ENCODE measurements at regions of chr10 and their contacts with region 1.

Region 1: GRCh38 chr10:17910125-17910789 is 41.5 kb upstream of the SLC39A12 start:
- DNase-seq: peak; percentile 51
- H3K4me3 ChIP-seq: no peak overlapping the region
- H3K27ac ChIP-seq: no peak overlapping the region
- H3K4me1 ChIP-seq: no peaks in the 10 kb centered on the region
- H3K27me3 ChIP-seq: peaks cover 5% of the 10 kb centered on the region in 2 experiments
- CTCF ChIP-seq: peak; percentile 46 to 47
- POLR2A ChIP-seq: no peak

Region 2: GRCh38 chr10:17836942-17837341 is 73.3 kb before region 1 on chr10:
- CTCF ChIA-PET with region 1: no interaction called
- POLR2A ChIA-PET with region 1: no interaction called
- dilution Hi-C with region 1: no loop called
- intact Hi-C with region 1: no loop called
- DNase-seq: peak; percentile 87
- H3K4me3 ChIP-seq: peak overlapping the region in 1 of 3 experiments; percentile 28
- H3K27ac ChIP-seq: peak overlapping the region; percentile 62
- H3K4me1 ChIP-seq: peaks cover 20% of the 10 kb centered on the region
- H3K27me3 ChIP-seq: no peaks in the 10 kb centered on the region
- CTCF ChIP-seq: no peak
- POLR2A ChIP-seq: no peak

Region 3: DNA sequence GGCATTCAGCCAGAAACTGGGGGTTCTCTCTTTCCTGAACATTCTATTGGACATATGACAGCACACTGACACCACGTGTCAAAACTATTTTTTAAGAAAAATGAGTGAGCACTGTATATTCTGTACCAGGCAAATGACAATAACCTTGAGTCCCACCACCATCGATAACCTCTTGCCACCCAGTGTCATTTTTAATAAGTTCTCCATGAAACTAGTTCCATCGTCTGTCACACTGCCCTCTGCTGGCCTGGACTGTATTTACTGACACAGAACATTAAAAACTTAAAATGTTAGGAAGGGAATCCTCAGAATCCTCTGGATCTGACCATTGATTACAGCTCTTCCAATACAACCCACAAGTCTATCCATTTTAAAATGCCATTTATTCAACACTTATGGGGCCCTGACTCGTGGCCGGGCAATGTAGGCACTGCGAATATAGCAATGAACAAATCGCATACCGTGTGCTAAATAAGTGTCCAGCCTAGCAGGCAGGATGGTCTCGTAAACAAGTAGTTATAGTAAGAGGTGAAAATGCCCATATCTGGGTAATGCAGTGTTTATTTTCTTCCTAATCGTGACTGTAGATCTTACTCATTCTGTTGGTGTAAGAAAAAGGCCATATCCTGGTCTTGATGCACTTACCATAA is 194.1 kb after region 1 on chr10:
- CTCF ChIA-PET with region 1: no interaction called
- POLR2A ChIA-PET with region 1: no interaction called
- dilution Hi-C with region 1: no loop called
- intact Hi-C with region 1: loop called (anchors 1 kb)
- DNase-seq: peak; percentile 52
- H3K4me3 ChIP-seq: no peak overlapping the region
- H3K27ac ChIP-seq: no peak overlapping the region
- H3K4me1 ChIP-seq: no peaks in the 10 kb centered on the region
- H3K27me3 ChIP-seq: no peaks in the 10 kb centered on the region
- CTCF ChIP-seq: peak; percentile 50 to 52
- POLR2A ChIP-seq: no peak

Region 4: GRCh38 chr10:18214691-18215563 is 304.7 kb after region 1 on chr10:
- CTCF ChIA-PET with region 1: interaction called, 3 read pairs
- POLR2A ChIA-PET with region 1: no interaction called
- dilution Hi-C with region 1: no loop called
- intact Hi-C with region 1: loop called (anchors 1 kb)
- DNase-seq: peak; percentile 55
- H3K4me3 ChIP-seq: no peak overlapping the region
- H3K27ac ChIP-seq: no peak overlapping the region
- H3K4me1 ChIP-seq: no peaks in the 10 kb centered on the region
- H3K27me3 ChIP-seq: no peaks in the 10 kb centered on the region
- CTCF ChIP-seq: peak; percentile 47 to 65
- POLR2A ChIP-seq: no peak

Measured in endothelial cell of umbilical vein (primary cell).